Activated CD4-positive, alpha-beta memory T cell treated with anti-CD3 and anti-CD28 coated beads for 36 hours (primary cell): ENCODE measurements at regions of chr12 and their contacts with region 1.

Region 1: DNA sequence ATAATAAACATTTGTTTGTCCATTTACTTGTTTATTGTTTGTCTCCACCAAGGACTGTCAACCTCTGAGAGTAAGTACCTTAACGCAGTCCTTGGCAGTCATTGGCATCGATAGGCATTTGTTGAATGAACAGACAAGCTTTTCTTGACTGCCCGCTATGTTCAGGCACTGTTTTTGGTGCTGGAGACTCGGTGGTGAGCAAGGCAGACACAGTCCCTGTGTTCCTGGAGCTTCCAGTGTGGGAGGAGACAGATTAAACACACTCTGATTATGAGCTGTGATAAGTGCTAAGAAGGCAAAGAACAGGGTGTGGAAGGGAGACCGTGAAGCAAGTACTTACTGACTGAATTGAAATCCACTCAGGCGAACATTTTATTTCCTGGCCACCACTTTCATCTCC is 1.2 kb downstream of the ATP6V0A2 start:
- DNase-seq: peak; percentile 35
- H3K4me3 Mint-ChIP-seq: peak overlapping the region; percentile 85
- H3K27ac Mint-ChIP-seq: peak overlapping the region; percentile 89
- H3K4me1 Mint-ChIP-seq: peaks cover 47% of the 10 kb centered on the region
- H3K27me3 Mint-ChIP-seq: no peaks in the 10 kb centered on the region

Region 2: DNA sequence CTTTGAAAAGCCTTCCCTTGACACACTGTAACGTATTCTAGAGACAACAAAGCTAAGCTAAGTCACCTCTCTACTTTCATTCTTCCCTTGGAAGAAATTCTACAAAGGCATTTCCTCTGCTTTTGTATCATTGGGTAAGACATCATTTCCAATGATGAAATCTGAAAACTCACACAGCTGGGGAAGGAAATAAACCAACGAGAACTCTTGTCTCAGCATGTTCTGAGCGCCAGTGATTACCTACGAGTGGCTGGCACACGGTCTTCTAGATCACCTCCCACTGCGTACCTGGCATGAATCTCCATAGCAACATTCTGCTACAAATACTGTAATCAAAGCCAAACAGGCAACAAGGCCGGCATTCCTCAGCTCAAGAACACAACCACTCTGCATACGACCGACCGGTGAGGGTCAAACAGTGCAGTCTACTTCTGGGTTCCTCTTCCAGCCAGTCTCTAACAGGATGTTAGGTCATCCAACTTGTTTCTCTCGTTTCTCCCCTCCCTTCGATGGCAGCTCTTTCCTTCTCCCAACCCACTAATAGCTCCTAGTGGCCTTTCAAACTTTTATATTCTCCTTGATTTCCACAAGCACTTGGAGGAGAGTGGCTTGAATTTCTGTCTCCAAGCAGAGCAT is 825.0 kb before region 1 on chr12:
- CTCF ChIA-PET with region 1: interaction called, 3 read pairs
- POLR2A ChIA-PET with region 1: no interaction called
- intact Hi-C with region 1: loop called (anchors 10 kb)
- DNase-seq: peak; percentile 65
- H3K4me3 Mint-ChIP-seq: peak overlapping the region; percentile 70
- H3K27ac Mint-ChIP-seq: peak overlapping the region; percentile 88
- H3K4me1 Mint-ChIP-seq: peaks cover 77% of the 10 kb centered on the region
- H3K27me3 Mint-ChIP-seq: peaks cover 5% of the 10 kb centered on the region

Region 3: DNA sequence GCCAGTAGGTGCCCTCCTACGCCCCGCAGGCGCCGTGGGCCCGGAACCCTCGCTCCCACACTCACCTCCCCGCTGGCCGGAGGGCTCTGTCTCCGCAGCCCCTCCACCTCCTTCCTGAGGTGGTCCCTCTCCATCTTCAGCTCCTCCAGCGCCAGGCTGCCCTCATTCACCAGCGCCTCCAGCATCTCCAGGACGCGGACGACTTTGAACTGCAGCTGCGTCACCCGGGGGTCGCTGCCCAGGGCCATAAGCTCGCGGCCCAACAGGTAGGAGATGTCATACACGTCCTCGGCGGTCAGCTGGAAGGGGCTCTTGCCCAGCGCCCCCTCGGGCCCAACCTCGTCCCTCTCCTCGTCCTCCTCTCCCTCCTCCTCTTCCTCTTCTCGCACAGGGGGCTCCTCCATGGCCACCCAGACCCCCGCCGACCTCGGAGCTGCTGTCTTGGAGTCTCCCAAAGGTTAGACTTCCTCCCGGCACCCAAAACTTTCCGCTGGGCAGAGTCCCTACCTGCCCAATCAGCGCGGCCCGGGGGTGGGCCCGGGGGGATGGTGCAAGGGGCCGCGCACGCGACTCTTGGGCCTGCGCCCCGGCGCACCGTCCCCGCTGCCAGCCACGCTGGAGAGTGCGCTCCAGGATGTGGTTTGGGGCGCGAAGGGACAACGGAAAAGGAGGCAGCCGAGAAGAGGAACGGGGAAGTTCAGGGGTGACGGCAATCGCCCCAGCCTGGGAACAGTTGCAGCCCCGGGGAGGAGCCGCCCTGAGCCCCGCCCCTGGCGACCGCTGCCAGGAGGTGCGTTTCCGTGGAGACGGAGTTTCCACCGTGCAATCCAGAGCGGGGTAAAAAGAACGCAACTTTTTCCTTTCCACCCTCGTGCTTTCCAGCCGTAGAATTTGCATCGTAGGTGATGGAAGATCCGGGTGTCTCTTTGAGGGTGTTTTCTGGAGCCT is 277.1 kb before region 1 on chr12 and contains the start of gene RILPL2:
- CTCF ChIA-PET with region 1: no interaction called
- POLR2A ChIA-PET with region 1: interaction called, 6 read pairs
- intact Hi-C with region 1: loop called (anchors 10 kb)
- DNase-seq: peak; percentile 97
- H3K4me3 Mint-ChIP-seq: peak within 1 kb of the TSS; percentile 99
- H3K27ac Mint-ChIP-seq: peak within 1 kb of the TSS; percentile 98
- H3K4me1 Mint-ChIP-seq: peaks cover 30% of the 10 kb centered on the region
- H3K27me3 Mint-ChIP-seq: no peaks in the 10 kb centered on the region
- total RNA-seq, gene RILPL2: 15.4 to 16.6 TPM

Region 4: GRCh38 chr12:123670882-123671728 is 42.3 kb before region 1 on chr12 and contains the start of gene TCTN2:
- CTCF ChIA-PET with region 1: interaction called, 3 read pairs
- POLR2A ChIA-PET with region 1: interaction called, 4 read pairs
- intact Hi-C with region 1: loop called (anchors 1 kb)
- DNase-seq: peak; percentile 97
- H3K4me3 Mint-ChIP-seq: peak within 1 kb of the TSS; percentile 82
- H3K27ac Mint-ChIP-seq: no peak within 1 kb of the TSS
- H3K4me1 Mint-ChIP-seq: peaks cover 17% of the 10 kb centered on the region
- H3K27me3 Mint-ChIP-seq: no peaks in the 10 kb centered on the region
- total RNA-seq, gene TCTN2: 3.7 to 3.8 TPM

Region 5: GRCh38 chr12:123743002-123743401 is 29.6 kb after region 1 on chr12:
- CTCF ChIA-PET with region 1: no interaction called
- POLR2A ChIA-PET with region 1: interaction called, 3 read pairs
- intact Hi-C with region 1: loop called (anchors 2 kb)
- DNase-seq: no peak
- H3K4me3 Mint-ChIP-seq: no peak overlapping the region
- H3K27ac Mint-ChIP-seq: peak overlapping the region; percentile 34
- H3K4me1 Mint-ChIP-seq: peaks cover 4% of the 10 kb centered on the region
- H3K27me3 Mint-ChIP-seq: no peaks in the 10 kb centered on the region

Region 6: DNA sequence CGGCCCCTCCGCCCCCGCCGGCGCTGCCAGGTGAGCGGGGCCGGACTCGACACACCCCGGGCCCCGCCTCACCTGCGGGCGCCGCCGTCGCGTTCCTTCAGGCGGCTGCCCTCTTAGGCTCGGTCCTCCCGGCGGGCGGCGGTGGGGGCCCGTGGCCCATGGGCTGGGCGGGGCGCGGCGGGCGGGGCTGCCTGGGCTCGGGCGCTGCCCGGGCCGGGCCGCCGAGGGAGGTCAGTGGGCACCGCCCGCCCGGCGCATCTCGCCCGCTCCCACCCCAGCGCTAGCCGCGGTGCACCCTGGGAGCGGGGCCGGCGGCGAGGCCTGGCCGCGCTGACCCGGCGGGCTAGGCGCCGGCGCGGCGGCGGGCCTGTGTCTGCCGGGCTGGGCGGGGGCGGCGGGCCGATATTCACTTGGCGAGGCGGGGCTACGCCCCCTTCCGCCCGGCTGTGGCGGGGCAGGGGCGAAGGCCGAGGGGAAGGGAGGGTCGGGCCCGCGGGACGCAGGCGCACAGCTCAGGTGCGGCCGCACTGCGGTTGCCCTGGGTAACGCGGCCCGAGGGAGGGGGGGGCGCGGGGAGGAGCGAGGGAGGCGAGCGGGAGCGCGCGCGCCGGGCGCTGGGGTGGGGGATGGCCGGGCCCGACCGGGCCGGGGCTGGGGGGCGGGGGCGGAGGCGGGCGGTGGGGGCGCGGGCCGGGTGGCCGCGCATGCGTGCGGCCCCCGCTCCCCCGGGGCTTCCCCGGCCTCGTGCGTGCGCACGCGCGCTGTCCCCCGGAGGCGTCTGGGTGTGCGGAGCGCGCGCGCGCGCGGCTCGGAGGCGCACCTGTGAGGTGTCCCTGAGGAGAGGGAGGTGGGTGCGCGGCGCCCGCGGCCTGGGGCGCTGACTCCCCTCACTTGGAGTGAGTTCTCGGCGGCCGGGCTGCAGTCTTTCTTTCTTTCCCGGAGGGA is 259.3 kb after region 1 on chr12 and contains the starts of genes CCDC92 and ZNF664:
- CTCF ChIA-PET with region 1: interaction called, 3 read pairs
- POLR2A ChIA-PET with region 1: interaction called, 4 read pairs
- intact Hi-C with region 1: loop called (anchors 2 kb)
- DNase-seq: peak; percentile 97
- H3K4me3 Mint-ChIP-seq: peak within 1 kb of the TSS; percentile 93
- H3K27ac Mint-ChIP-seq: peak within 1 kb of the TSS; percentile 73
- H3K4me1 Mint-ChIP-seq: peaks cover 44% of the 10 kb centered on the region
- H3K27me3 Mint-ChIP-seq: no peaks in the 10 kb centered on the region
- total RNA-seq, gene CCDC92: 11.4 to 11.7 TPM
- total RNA-seq, gene ZNF664: 53.2 to 56.9 TPM